Activated CD4-positive, alpha-beta T cell treated with anti-CD3 and anti-CD28 coated beads, Interleukin-2, amount 10 ng/mL, durations not matched to agents 24 days and 14 days (primary cell): ENCODE measurements at regions of chr1 and their contacts with region 1.

Region 1: GRCh38 chr1:185439727-185440415 is 122.8 kb upstream of the IVNS1ABP start:
- DNase-seq: peak; percentile 86
- H3K4me3 Mint-ChIP-seq: no peak overlapping the region
- H3K27ac Mint-ChIP-seq: no peak overlapping the region
- H3K4me1 Mint-ChIP-seq: peaks cover 28% of the 10 kb centered on the region
- H3K27me3 Mint-ChIP-seq: no peaks in the 10 kb centered on the region

Region 2: DNA sequence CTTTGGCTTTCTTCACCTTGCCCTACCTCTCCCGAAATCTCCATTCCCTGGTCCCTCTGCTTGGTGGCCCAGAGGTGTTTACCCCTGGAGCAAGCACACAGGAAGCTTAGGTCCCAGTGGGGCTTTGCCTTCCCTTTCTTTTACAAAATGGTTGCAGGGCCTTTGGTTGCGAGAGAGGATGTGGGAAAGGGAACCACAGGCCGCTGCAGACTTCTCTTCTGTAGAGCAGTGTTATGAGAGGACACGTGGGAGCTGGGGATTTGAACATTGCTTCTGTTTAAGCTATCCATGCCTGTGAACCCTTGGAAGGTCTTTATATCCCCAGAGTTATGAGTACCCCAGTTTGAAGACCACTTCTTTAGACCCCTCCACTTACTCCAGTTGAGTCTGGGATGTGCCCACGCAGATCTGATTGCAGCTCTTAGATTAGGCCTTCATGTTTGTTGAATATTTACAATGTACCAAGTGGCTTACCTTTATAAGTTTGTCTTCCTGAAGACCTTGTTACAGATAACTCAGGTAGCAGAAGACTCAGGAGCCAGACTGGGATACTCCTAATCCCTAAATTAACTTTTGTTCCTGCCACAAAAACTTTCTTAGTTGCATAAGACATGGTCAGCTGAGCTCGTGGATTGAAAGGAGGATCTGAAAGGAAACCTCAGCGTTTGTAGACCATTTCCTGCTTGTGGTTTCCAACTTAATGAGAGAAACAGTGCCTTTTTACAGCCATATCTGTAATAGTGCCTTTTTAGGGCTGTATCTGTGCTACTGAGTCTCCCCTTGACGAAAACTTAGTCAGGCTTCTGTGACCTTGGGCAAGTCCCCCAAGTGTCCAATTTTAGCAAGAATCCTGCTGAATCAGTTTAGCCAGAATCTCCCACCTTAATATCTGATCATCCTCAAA is 100.9 kb before region 1 on chr1:
- intact Hi-C with region 1: loop called (anchors 2 kb)
- DNase-seq: peak; percentile 90
- H3K4me3 Mint-ChIP-seq: peak overlapping the region; percentile 57
- H3K27ac Mint-ChIP-seq: peak overlapping the region; percentile 70
- H3K4me1 Mint-ChIP-seq: peaks cover 40% of the 10 kb centered on the region
- H3K27me3 Mint-ChIP-seq: peaks cover 2% of the 10 kb centered on the region

Region 3: DNA sequence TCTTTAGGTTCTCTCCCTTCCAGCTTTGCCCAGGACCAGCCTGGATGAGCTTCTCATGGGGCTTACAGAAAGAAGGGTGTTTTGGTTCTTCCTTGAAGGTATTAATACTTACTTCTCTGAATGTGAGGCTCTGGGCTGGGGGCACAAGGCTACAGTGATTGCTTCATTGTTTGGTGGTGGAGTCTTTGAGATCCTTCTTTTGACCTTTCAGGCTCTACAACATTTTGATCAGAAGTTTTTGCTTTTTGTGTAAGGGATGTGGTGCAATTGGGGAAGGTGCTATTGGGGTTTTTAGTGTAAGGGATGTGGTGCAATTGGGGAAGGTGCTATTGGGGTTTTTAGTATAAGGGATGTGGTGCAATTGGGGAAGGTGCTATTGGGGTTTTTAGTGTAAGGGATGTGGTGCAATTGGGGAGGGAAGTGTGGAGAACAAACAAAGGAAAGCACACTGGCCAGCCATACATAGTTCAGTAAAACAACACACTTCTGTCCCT is 19.2 kb before region 1 on chr1:
- intact Hi-C with region 1: loop called (anchors 1 kb)
- DNase-seq: peak; percentile 86
- H3K4me3 Mint-ChIP-seq: peak overlapping the region; percentile 74
- H3K27ac Mint-ChIP-seq: peak overlapping the region; percentile 92
- H3K4me1 Mint-ChIP-seq: peaks cover 62% of the 10 kb centered on the region
- H3K27me3 Mint-ChIP-seq: no peaks in the 10 kb centered on the region

Region 4: DNA sequence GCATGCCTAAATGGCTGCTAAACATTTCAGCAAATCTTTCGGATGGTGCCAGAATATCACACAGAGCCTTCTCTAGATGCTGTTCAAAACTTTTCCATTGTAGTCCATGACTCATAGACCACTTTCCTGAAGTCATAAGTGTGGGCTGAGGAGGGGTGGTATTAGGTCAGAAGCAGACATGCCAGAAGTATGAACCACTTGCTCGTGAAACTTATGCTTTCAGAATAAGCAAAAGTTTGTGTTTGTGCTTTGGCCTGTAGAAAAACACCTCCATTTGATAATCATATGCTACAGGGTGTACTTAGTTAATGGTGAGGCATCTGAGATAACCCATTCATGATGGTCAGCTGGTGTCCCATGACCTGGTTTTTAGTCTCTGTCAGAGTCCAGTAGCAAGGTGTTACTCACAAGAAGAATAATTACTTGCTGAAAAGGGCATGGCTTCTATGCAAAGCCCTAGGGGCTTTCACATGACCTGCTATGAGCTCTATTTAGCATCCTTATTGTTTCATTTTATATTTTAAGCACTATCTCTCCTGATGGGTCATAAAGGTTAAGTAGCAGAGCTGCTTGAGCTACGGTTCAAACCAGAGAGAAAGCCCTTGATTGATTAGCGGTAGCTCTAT is 60.2 kb after region 1 on chr1:
- intact Hi-C with region 1: loop called (anchors 1 kb)
- DNase-seq: no peak
- H3K4me3 Mint-ChIP-seq: no peak overlapping the region
- H3K27ac Mint-ChIP-seq: peak overlapping the region; percentile 73
- H3K4me1 Mint-ChIP-seq: peaks cover 22% of the 10 kb centered on the region
- H3K27me3 Mint-ChIP-seq: no peaks in the 10 kb centered on the region

Region 5: GRCh38 chr1:185566995-185567394 is 127.1 kb after region 1 on chr1:
- intact Hi-C with region 1: loop called (anchors 1 kb)
- DNase-seq: peak; percentile 89
- H3K4me3 Mint-ChIP-seq: peak overlapping the region; percentile 64
- H3K27ac Mint-ChIP-seq: peak overlapping the region; percentile 82
- H3K4me1 Mint-ChIP-seq: peaks cover 43% of the 10 kb centered on the region
- H3K27me3 Mint-ChIP-seq: no peaks in the 10 kb centered on the region

Region 6: DNA sequence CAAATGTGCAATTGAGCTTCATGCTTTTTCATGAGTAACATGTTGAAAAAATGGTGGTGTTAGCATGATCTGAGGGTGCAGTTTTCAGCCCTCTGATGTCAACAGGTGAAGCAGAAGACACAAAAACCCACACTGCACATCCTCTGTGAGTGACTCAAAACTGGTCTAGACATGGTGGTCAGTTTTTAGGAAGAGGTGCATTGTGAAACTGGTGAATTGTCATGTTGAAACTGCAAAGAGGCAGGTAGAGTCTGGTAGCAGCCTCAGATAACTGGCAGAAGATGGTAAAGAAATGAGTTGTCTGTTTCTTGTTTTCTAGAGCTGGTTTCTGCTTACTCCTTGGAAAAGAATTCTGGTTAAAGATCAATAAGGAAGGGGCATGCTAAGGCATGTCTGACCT is 197.0 kb after region 1 on chr1:
- intact Hi-C with region 1: loop called (anchors 1 kb)
- DNase-seq: peak; percentile 84
- H3K4me3 Mint-ChIP-seq: peak overlapping the region; percentile 18
- H3K27ac Mint-ChIP-seq: peak overlapping the region; percentile 92
- H3K4me1 Mint-ChIP-seq: peaks cover 20% of the 10 kb centered on the region
- H3K27me3 Mint-ChIP-seq: no peaks in the 10 kb centered on the region

Region 7: DNA sequence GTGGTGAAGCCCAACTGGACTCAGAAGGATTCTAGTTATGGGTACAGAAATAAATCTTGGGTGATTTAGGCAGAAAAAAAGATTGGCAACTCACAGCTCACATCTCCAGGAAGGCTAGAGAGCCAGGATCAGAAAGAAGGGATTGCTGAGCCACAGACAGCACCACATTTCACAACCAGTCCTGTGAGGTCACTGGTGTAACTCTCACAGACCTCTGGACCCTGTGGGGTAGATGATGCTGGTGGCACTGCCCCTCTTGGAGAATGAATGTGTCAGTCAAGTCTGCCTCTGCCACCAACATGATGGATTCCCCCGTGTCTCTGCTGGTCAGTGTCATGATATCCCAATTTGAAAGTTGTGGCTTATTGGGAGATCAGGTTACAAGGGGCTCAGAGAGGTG is 223.5 kb after region 1 on chr1:
- intact Hi-C with region 1: loop called (anchors 10 kb)
- DNase-seq: no peak
- H3K4me3 Mint-ChIP-seq: no peak overlapping the region
- H3K27ac Mint-ChIP-seq: no peak overlapping the region
- H3K4me1 Mint-ChIP-seq: peaks cover 11% of the 10 kb centered on the region
- H3K27me3 Mint-ChIP-seq: no peaks in the 10 kb centered on the region

Region 8: DNA sequence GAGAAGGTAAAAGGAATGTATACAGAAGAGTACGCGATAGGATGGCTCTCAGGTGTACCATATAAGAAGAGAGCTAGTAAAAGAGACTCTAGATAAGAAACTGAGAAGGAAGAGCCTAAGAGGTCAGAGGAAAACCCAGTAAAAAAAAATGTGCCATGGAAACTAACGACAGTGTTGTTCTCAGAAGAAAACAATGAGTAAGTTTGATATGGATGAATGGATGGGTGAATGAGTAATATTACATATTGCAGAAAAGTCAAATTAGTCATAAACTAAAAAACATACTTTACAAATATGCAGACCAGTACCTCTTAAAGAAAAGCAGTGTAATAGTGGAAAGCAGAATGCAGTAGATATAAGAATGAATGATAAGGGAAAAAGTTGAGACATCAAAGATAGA is 610.5 kb after region 1 on chr1:
- intact Hi-C with region 1: no loop called
- DNase-seq: no peak
- H3K4me3 Mint-ChIP-seq: no peak overlapping the region
- H3K27ac Mint-ChIP-seq: no peak overlapping the region
- H3K4me1 Mint-ChIP-seq: no peaks in the 10 kb centered on the region
- H3K27me3 Mint-ChIP-seq: no peaks in the 10 kb centered on the region